ENCODE measurements at regions of chr1 and their contacts with region 1.

Region 1: DNA sequence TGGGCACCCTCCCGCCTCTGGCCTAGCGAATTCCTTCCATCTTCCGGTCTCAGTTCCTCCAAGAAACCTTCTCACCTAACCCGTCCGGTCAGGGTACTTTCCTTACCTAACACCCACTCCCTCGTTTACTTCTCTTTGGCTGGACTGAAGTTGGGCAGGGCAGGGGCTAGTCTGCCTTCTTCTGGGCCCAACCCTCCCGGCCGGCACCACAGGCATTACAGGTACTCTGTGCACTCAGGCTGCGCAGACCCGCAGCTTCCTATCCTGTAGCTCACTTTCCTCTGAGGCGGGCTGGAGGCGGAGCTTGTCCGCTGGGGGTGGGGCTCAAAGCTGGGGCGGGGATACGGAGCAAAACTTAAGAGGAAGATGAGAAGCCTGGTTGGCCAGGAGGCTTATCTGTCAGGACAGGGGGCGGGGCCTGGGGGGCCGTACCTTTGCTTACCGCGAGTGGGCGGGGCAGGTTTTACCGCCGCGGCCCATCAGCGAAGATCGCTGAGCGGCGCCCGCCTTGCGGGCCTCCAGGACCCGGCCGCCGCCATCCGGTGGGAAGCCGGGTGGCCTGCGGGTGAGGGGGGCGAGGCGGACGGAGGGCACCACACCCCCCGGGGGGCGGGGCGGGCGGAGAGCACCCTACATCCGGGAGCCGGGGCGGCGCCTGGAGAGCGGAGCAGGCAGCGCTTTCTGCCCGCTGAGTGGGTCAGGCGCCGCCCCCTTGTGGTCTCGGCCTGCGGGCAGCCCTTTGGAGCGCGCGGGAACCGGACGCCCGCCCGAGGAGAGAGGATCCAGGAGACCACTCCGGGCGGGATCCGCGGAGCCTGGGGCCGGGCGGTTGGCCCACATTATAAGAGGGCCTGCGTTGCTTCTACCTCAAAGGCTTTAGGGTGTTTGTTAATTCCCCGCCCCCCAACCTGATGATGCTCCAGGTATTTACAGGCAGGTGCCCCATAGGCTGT is 31.9 kb downstream of the ZNF648 start:
- DNase-seq: peak; percentile 95
- H3K4me3 Mint-ChIP-seq: peak overlapping the region; percentile 91
- H3K27ac Mint-ChIP-seq: peak overlapping the region; percentile 94
- H3K4me1 Mint-ChIP-seq: peaks cover 12% of the 10 kb centered on the region
- H3K27me3 Mint-ChIP-seq: peaks cover 3% of the 10 kb centered on the region

Region 2: DNA sequence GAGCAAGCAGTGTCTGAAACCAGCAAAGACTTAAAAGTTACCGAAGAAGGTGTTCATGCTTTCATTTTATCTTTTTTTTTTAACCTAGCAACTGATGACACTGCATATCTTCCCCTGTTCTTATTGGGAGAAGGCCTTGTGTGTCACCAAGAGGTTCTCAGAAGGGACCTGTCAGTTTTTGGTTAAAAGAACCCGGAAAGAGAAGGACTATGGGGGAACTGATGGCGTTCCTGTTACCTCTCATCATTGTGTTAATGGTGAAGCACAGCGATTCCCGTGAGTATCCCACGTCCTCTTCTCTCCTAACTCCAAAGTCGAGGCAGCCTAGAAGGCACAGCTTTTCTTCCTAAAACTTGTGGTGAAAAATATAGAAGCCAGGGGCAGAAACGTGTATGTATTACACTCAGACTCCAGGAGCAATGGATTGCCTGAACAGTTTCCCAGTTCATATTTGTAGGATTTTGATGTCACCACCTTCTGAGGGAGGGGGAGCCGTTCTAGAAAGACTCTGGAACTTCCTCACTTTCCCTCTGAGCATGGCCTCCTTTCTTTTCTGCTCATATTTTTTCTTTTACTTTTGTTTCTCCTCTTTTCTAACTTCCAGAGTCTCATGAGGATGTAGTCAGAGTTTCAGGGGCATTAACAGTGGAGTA is 995.7 kb before region 1 on chr1 and contains the start of gene MR1:
- intact Hi-C with region 1: loop called (anchors 10 kb)
- DNase-seq: peak; percentile 51
- H3K4me3 Mint-ChIP-seq: peak within 1 kb of the TSS; percentile 95
- H3K27ac Mint-ChIP-seq: peak within 1 kb of the TSS; percentile 96
- H3K4me1 Mint-ChIP-seq: peaks cover 63% of the 10 kb centered on the region
- H3K27me3 Mint-ChIP-seq: no peaks in the 10 kb centered on the region
- total RNA-seq, gene MR1: 16.6 and 17.6 TPM in 2 replicates

Region 3: DNA sequence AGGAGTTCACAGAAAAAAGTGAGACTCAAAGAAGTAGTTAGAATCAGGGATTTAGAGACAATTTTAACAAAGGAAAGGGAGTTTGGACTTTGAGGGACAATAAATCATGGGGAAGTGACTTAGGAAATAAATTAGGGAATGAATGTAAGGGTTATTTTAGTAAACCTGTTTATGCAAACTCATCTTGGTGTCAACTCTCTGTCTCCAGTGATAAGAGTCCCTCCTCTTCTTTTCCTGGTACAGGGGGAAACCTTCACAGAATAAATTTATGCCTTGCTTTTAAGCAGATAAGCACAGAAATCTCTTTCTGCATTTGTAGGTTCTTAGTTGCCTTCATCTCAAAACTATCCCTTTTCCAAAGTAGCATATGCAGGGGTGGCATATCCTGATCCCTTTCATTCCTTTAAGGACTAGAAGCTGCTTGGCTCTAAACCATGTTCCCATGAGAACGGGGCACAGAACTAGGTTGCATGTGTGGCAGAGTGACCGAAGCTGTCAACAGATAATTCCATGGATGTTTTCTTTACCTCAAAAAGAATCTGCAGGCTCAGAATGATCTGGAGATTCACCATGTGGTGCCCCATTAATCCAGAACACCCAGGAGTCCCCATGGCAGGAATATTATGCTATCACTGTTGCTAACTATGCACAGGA is 123.6 kb before region 1 on chr1:
- intact Hi-C with region 1: no loop called
- DNase-seq: no peak
- H3K4me3 Mint-ChIP-seq: no peak overlapping the region
- H3K27ac Mint-ChIP-seq: no peak overlapping the region
- H3K4me1 Mint-ChIP-seq: no peaks in the 10 kb centered on the region
- H3K27me3 Mint-ChIP-seq: peaks cover 5% of the 10 kb centered on the region

Region 4: GRCh38 chr1:182046763-182047162 is 17.1 kb after region 1 on chr1:
- intact Hi-C with region 1: loop called (anchors 2 kb)
- DNase-seq: no peak
- H3K4me3 Mint-ChIP-seq: no peak overlapping the region
- H3K27ac Mint-ChIP-seq: peak overlapping the region; percentile 67
- H3K4me1 Mint-ChIP-seq: peaks cover 31% of the 10 kb centered on the region
- H3K27me3 Mint-ChIP-seq: peaks cover 3% of the 10 kb centered on the region

Region 5: DNA sequence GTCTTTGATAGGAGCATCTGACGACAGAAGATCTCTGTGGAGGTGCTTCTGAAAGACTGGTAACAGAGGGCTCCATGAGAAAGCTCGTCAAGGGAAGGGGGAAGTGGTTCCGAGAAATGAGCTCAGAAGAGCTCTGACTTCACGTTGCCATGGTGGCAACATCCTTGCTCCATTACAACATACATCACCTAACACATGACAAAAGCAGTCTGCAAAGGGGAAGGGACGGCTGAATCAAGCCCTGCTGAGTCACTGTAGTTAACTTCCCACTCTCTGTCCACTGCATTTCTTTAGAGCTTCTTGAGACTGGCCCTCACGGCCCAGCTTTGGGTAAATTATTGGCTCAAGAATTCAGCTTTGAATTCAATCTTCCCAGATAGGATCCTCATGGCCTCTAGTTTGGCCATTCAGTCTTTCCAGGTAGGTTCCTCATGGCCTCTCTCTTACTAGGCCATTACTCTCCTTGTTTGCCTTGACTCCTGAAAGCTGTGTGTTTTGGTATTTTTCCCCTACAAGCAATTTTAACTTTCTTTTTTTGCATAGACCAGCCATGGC is 119.8 kb after region 1 on chr1:
- intact Hi-C with region 1: no loop called
- DNase-seq: peak; percentile 60
- H3K4me3 Mint-ChIP-seq: peak overlapping the region; percentile 65
- H3K27ac Mint-ChIP-seq: peak overlapping the region; percentile 88
- H3K4me1 Mint-ChIP-seq: peaks cover 51% of the 10 kb centered on the region
- H3K27me3 Mint-ChIP-seq: no peaks in the 10 kb centered on the region

Region 6: GRCh38 chr1:182391362-182392044 is 361.8 kb after region 1 on chr1 and contains the start of gene GLUL:
- intact Hi-C with region 1: loop called (anchors 1 kb)
- DNase-seq: peak; percentile 82
- H3K4me3 Mint-ChIP-seq: peak within 1 kb of the TSS; percentile 99
- H3K27ac Mint-ChIP-seq: peak within 1 kb of the TSS; percentile 90
- H3K4me1 Mint-ChIP-seq: peaks cover 46% of the 10 kb centered on the region
- H3K27me3 Mint-ChIP-seq: peaks cover 12% of the 10 kb centered on the region
- total RNA-seq, gene GLUL: 89.6 and 101 TPM in 2 replicates

Region 7: GRCh38 chr1:182614796-182615454 is 585.3 kb after region 1 on chr1:
- intact Hi-C with region 1: loop called (anchors 5 kb)
- DNase-seq: peak; percentile 34
- H3K4me3 Mint-ChIP-seq: peak overlapping the region; percentile 81
- H3K27ac Mint-ChIP-seq: peak overlapping the region; percentile 88
- H3K4me1 Mint-ChIP-seq: peaks cover 89% of the 10 kb centered on the region
- H3K27me3 Mint-ChIP-seq: peaks cover 16% of the 10 kb centered on the region

Region 8: GRCh38 chr1:182839209-182840065 is 809.8 kb after region 1 on chr1 and contains the start of gene DHX9:
- intact Hi-C with region 1: loop called (anchors 10 kb)
- DNase-seq: peak; percentile 94
- H3K4me3 Mint-ChIP-seq: peak within 1 kb of the TSS; percentile 94
- H3K27ac Mint-ChIP-seq: peak within 1 kb of the TSS; percentile 98
- H3K4me1 Mint-ChIP-seq: peaks cover 47% of the 10 kb centered on the region
- H3K27me3 Mint-ChIP-seq: peaks cover 3% of the 10 kb centered on the region
- total RNA-seq, gene DHX9: 346 and 355 TPM in 2 replicates

Measured in activated T-helper 1 cell treated with anti-CD3 and anti-CD28 coated beads, Interleukin-12 subunit alpha, Interleukin-12 subunit beta, Interleukin-2, Interleukin-4 antibody, amounts not matched to agents 30 ng/mL and 10 ng/mL and 1 ng/mL, durations not matched to agents 14 hours and 24 hours and 36 hours (primary cell).